ENCODE measurements at regions of chr10 and their contacts with region 1.

Region 1: DNA sequence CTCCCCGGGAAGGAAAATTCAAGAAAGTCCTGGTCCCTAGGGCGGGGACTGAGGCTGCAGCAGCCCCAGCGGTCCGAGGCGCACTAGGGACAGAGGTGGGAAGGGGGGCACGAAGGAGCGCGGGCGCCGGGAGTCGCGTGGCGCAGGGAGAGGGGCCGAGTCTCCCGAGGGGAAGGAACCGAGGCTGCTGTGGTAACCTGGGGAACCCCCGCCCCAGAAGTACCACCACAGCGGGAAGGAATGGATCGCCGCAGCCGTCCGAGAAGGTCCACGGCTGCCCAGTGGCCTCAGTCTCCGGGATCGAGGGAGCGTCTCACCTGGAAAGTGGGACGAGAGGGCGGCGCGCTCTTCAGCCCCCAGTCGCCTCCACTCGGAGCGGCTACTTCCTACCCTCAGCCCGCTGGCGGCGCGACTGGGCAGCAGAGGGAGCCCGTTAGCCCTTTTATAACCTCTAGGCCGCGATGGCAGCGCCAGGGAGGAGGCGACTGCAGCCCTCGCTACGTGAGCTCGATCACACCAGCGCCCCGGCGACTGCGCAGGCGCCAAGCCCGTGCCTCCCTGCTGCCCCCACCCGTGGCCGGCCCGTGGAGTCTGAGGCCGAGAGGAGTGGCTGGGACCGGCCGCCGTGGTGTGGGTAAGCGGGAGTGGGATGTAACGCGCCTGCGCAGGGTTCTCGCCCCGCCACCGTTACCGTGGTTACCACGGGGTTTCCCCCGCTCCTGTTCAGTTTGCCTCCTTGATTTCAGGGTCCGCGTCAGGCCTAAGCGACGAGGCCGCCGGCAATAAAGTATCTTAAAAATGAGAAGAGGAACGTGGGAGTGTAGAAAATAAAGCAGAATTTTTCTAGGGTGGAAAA is at the start of gene P4HA1:
- DNase-seq: peak; percentile 93
- ATAC-seq: peak; percentile 93
- H3K4me3 ChIP-seq: peak within 1 kb of the TSS; percentile 97 to 100 (median 99)
- H3K27ac ChIP-seq: peak within 1 kb of the TSS; percentile 84
- H3K4me1 ChIP-seq: peaks cover 30% of the 10 kb centered on the region
- H3K27me3 ChIP-seq: no peaks in the 10 kb centered on the region; a peak in 1 of 5 replicates
- CTCF ChIP-seq: peak; percentile 96
- EP300 ChIP-seq: peak in 1 of 2 experiments; percentile 17; a peak in 1 of 4 replicates
- POLR2A ChIP-seq: peak; percentile 99 to 100
- RAD21 ChIP-seq: peak; percentile 93
- total RNA-seq, gene P4HA1: 39.0 and 63.1 TPM in 2 replicates

Region 2: DNA sequence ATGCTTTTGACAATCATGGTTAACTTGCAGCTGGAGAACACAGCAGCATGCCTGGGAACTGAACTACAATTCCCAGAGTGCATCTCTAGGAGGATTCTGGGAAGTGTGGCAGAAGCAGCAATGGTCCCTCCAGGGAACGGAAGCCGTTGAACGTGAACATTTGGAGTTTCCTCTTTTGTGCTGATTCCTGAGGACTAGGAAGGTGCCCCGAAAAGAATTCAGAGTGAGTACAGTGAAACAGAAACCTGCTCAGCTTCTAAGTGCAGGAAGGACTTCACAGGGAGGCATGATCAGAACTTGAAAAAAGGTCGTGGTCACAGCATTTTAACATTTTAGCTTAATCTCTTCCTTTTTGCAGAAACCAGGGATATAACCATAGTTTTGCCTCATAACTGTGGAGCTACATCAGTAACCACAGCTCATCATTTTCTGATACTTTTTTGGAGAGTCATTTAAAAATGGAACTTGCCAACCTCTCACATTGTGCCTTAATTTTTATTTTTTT is 13.7 kb after region 1 on chr10 and contains the start of gene NUDT13:
- CTCF ChIA-PET with region 1: no interaction called
- POLR2A ChIA-PET with region 1: interaction called, 72 read pairs
- in situ Hi-C with region 1: no loop called
- intact Hi-C with region 1: no loop called
- DNase-seq: peak; percentile 83
- ATAC-seq: peak; percentile 98
- H3K4me3 ChIP-seq: peak within 1 kb of the TSS; percentile 45 to 82 (median 80)
- H3K27ac ChIP-seq: peak within 1 kb of the TSS; percentile 96
- H3K4me1 ChIP-seq: peaks cover 11% of the 10 kb centered on the region
- H3K27me3 ChIP-seq: no peaks in the 10 kb centered on the region
- CTCF ChIP-seq: no peak
- EP300 ChIP-seq: no peak
- POLR2A ChIP-seq: peak; percentile 68 to 71
- RAD21 ChIP-seq: no peak
- total RNA-seq, gene NUDT13: 2.5 and 4.2 TPM in 2 replicates

Region 3: GRCh38 chr10:73117976-73118743 is 21.5 kb after region 1 on chr10:
- CTCF ChIA-PET with region 1: no interaction called
- POLR2A ChIA-PET with region 1: interaction called, 12 read pairs
- in situ Hi-C with region 1: no loop called
- intact Hi-C with region 1: no loop called
- DNase-seq: peak; percentile 53
- ATAC-seq: peak; percentile 54; the same call in 2 of the 3 replicates
- H3K4me3 ChIP-seq: no peak overlapping the region; a peak in 1 of 6 replicates
- H3K27ac ChIP-seq: peak overlapping the region; percentile 61
- H3K4me1 ChIP-seq: peaks cover 52% of the 10 kb centered on the region
- H3K27me3 ChIP-seq: no peaks in the 10 kb centered on the region
- CTCF ChIP-seq: no peak
- EP300 ChIP-seq: peak in 1 of 2 experiments; percentile 39; a peak in 1 of 4 replicates
- POLR2A ChIP-seq: no peak
- RAD21 ChIP-seq: no peak

Region 4: GRCh38 chr10:73131301-73131700 is 34.6 kb after region 1 on chr10:
- CTCF ChIA-PET with region 1: no interaction called
- POLR2A ChIA-PET with region 1: interaction called, 28 read pairs
- in situ Hi-C with region 1: no loop called
- intact Hi-C with region 1: no loop called
- DNase-seq: no peak
- ATAC-seq: no peak
- H3K4me3 ChIP-seq: no peak overlapping the region
- H3K27ac ChIP-seq: peak overlapping the region; percentile 73
- H3K4me1 ChIP-seq: peaks cover 44% of the 10 kb centered on the region
- H3K27me3 ChIP-seq: no peaks in the 10 kb centered on the region
- CTCF ChIP-seq: no peak
- EP300 ChIP-seq: no peak
- POLR2A ChIP-seq: no peak
- RAD21 ChIP-seq: no peak

Region 5: DNA sequence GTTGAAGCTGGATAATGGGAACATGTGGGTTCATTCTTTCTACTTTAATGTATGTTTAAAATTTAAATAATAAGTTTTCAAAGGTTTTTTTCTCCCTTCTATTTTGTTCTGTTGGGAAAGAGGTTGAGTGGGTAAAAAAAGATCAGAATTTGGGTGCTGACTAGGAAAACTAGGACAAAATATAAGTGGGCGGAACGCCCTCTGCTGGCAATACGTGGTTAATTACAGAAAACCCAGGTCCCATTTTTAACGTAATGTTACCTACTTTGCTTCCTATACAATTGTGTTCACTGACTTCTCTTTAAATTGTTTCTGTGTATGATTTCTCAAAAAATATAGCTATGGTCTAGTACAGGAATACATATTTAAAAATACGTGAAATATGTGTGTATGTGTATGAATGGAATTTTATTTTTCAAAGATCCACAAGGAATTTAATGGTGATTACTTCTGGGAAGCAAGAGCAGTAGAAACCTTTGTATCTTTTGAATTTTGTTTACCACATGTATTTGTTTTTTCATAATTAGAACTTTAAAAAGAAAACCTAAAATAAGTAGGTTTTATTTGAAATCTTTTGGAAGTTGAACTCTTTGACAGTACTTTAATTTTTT is 62.5 kb after region 1 on chr10:
- CTCF ChIA-PET with region 1: interaction called, 15 read pairs
- POLR2A ChIA-PET with region 1: interaction called, 6 read pairs
- in situ Hi-C with region 1: no loop called
- intact Hi-C with region 1: loop called (anchors 1 kb)
- DNase-seq: peak; percentile 59
- ATAC-seq: 0 out of 3 replicates have a peak, but pooled peaks have one; percentile 32
- H3K4me3 ChIP-seq: no peak overlapping the region
- H3K27ac ChIP-seq: no peak overlapping the region
- H3K4me1 ChIP-seq: peaks cover 14% of the 10 kb centered on the region; the same call in 1 of the 2 replicates
- H3K27me3 ChIP-seq: no peaks in the 10 kb centered on the region; a peak in 1 of 5 replicates
- CTCF ChIP-seq: peak; percentile 75
- EP300 ChIP-seq: no peak
- POLR2A ChIP-seq: no peak
- RAD21 ChIP-seq: peak; percentile 42; the same call in 1 of the 2 replicates

Region 6: DNA sequence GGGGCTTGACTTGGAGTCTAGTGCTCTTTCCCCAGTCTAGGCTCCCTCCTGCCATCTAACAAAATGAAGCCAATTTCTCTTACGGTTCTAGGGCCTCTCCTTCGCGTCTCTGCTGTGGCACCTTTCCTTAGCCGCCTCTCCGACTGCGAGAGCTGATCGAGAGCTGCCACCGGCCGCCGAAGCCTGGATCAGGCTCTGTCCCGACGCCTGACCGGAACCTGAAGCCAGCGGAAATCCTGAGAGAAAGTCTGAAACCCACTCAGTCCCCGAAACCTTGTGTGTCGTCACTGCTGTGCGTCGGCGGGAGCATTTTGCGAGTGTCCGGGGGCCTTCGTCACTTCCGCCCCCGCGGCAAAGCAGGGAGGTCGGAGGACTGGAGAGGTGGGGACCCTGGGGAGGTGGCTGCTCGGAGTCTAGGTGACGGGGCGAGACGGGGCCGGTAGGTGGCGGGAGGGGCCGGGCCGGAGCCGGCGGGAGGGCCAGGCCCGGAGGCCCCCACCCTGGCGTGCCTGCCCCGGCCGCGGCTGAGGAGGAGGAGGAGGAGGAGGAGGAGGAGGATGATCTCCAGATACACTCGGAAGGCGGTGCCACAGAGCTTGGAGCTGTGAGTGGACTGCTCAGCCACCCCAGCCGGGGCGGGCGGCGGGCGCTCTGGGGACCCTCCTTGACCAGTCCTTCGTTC is 71.2 kb after region 1 on chr10 and contains the starts of genes ECD and FAM149B1:
- CTCF ChIA-PET with region 1: no interaction called
- POLR2A ChIA-PET with region 1: interaction called, 11 read pairs
- in situ Hi-C with region 1: no loop called
- intact Hi-C with region 1: loop called (anchors 2 kb)
- DNase-seq: peak; percentile 95
- ATAC-seq: peak; percentile 98
- H3K4me3 ChIP-seq: peak within 1 kb of the TSS; percentile 80 to 89 (median 84)
- H3K27ac ChIP-seq: peak within 1 kb of the TSS; percentile 89
- H3K4me1 ChIP-seq: peaks cover 15% of the 10 kb centered on the region
- H3K27me3 ChIP-seq: no peaks in the 10 kb centered on the region; a peak in 1 of 5 replicates
- CTCF ChIP-seq: peak; percentile 66
- EP300 ChIP-seq: peak; percentile 28 to 63; a peak in 3 of 4 replicates
- POLR2A ChIP-seq: peak; percentile 92 to 93
- RAD21 ChIP-seq: peak; percentile 65; the same call in 1 of the 2 replicates
- total RNA-seq, gene ECD: 27.6 and 41.8 TPM in 2 replicates
- total RNA-seq, gene FAM149B1: 9.1 and 9.3 TPM in 2 replicates

Region 7: DNA sequence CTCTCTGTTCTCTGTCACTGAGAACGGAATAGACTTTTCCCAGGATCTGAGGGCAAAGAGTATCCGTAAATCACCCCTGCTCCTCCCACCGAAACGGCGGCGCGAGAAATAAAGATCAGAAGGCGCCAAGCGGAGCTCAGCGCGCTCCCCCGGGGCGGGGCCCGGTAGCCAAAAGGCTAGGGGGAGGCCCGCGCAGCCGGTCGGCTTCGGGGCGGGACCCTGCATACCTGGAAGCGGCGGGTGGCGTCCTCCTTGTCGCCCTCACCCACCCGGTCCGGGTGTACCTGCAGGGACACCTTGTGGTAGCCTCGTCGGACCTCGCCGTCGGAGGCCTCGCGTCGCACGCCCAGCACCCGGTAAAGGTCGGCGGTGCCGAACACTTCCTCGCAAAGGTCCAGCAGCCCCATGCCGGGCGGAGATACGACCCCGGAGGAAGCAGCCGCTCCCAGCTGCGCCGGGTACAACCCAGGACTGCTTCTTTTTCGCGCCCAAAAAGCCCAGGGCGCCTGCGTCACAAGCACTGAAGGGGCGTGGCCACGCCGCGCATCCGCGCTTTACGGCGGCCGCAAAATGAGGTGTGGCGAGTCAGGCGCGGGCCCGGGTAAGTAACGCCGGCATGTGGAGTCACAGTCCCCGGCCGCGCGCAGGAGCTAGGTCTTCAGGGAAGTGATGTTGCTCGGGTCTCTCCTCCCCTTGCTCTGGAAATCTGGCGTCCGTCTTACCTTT is 150.3 kb after region 1 on chr10 and contains the start of gene DNAJC9:
- CTCF ChIA-PET with region 1: no interaction called
- POLR2A ChIA-PET with region 1: interaction called, 10 read pairs
- in situ Hi-C with region 1: no loop called
- intact Hi-C with region 1: no loop called
- DNase-seq: peak; percentile 87
- ATAC-seq: peak; percentile 90
- H3K4me3 ChIP-seq: peak within 1 kb of the TSS; percentile 64 to 97 (median 79)
- H3K27ac ChIP-seq: peak within 1 kb of the TSS; percentile 94
- H3K4me1 ChIP-seq: peaks cover 50% of the 10 kb centered on the region
- H3K27me3 ChIP-seq: no peaks in the 10 kb centered on the region; a peak in 1 of 5 replicates
- CTCF ChIP-seq: peak; percentile 75
- EP300 ChIP-seq: 0 out of 4 replicates have a peak, but pooled peaks of 1 of the 2 experiments have one; percentile 3
- POLR2A ChIP-seq: peak; percentile 89 to 96
- RAD21 ChIP-seq: peak; percentile 59
- total RNA-seq, gene DNAJC9: 60.3 and 76.9 TPM in 2 replicates